Transverse colon (tissue), 4 donors: ENCODE measurements at regions of chr7 and their contacts with region 1.

Region 1: GRCh38 chr7:32942786-32943653 is 14.2 kb upstream of the FKBP9 start:
- DNase-seq: peak; percentile 86
- H3K4me3 ChIP-seq: peak overlapping the region; percentile 68 to 98 (median 90)
- H3K27ac ChIP-seq: peak overlapping the region; percentile 96 to 99 (median 99)
- H3K4me1 ChIP-seq: peaks cover 5 to 34% (median 11%) of the 10 kb centered on the region in 4 donors
- H3K27me3 ChIP-seq: no peaks in the 10 kb centered on the region
- CTCF ChIP-seq: peak in 4 of 5 experiments; percentile 32 to 65 (median 53)
- EP300 ChIP-seq: no peak
- POLR2A ChIP-seq: peak; percentile 26

Region 2: DNA sequence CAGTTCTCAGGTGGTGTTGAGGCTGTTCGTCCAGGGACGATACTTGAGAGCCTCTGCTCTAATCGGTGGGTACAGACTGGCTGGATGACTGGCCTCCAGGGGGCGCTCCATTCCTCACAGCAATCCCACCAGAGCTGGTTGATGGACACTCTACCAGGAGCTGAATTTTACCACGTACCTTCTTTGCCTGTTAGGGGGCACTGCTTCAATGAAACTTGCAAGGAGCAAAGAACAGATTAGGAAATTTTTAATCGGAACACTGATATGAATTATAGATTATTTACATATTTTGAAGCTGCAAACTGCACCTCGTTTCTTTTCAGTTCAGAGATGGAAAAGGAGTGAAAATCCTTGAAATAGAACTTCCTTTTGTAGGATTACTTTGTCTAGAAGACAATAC is 96.3 kb before region 1 on chr7:
- in situ Hi-C with region 1: loop called in 1 of 4 experiments (anchors 25 kb)
- intact Hi-C with region 1: no loop called
- DNase-seq: peak; percentile 92
- H3K4me3 ChIP-seq: no peak overlapping the region
- H3K27ac ChIP-seq: no peak overlapping the region
- H3K4me1 ChIP-seq: peaks cover 0 to 9% (median 3%) of the 10 kb centered on the region in 4 donors
- H3K27me3 ChIP-seq: no peaks in the 10 kb centered on the region
- CTCF ChIP-seq: peak; percentile 78 to 91 (median 90)
- EP300 ChIP-seq: no peak
- POLR2A ChIP-seq: no peak